Left colon (tissue), 2 donors: ENCODE measurements at regions of chr4 and their contacts with region 1.

Region 1: DNA sequence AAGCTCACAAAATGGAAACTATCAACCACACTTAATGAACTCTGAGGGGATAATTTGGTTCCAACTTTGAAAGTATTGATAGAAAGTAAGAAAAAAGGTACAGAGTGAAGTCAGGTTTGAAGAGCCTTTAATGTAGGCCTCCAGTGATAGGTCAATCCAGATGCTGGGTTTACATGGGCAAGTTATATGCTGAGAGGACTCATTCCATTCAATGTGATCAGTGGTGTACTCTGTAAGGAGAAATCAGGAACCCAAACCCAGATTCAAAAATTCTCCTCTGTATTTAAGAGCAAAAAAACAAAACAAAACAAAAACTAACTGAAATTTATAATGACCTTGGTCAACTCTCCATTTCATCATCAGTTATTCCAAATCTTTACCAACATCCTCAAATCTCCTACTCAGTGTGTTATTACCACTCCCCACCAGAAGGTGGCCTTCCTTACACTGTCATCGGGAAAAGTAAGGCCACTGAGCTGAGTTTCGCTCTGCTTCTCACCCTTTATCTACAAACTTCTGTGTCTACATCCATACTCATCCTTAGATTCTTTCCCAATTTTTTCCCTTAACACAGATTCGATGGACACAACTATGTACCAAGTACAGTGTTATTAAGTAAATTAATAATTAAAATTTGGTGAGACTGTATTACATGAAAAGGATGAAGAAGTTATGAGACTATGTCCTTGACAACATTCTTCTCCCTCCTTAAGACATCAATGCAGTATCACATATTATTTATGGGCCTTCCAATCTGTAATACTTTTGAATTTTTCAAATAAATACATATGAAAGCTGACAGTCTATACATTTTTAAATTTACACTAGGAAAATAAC is 88.3 kb downstream of the ZAR1 start:
- DNase-seq: peak in 1 of 2 donors; percentile 62
- ATAC-seq: peak; percentile 89

Region 2: DNA sequence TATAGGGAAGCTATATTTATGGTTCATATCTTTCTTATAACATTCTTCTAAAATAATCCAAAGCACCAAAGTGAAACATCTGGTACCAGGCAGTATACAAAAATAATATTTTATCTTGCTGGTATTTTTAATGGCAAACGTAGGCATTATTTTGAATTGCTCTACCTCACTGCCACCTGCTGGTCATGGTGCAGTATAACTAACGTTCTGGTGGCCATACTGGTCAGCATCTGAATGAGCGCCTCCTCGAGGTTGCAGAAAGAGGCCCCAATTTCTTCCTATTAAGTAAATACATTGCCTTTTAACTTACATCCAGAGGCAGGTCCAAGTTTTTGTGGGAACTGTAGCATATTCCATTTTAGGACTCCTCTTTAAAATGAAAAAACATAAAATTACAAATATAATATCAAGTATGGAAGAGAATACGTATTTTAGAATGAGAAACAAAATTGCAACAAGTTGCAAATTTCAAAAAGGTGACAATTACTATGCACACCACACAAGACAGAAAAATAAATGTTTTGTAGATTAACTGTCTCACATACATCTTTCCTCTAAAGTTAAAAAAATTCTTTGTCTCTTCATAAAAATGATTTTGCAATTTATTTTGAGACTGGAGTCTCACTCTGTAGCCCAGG is 384.8 kb after region 1 on chr4:
- intact Hi-C with region 1: loop called in 1 of 2 experiments (anchors 5 kb)
- DNase-seq: peak; percentile 64 to 66
- ATAC-seq: peak; percentile 94